ENCODE measurements at regions of chr22 and their contacts with region 1.

Region 1: GRCh38 chr22:19909350-19910179 is 32.0 kb upstream of the COMT start:
- DNase-seq: peak; percentile 58 to 92
- ATAC-seq: peak; percentile 94

Region 2: GRCh38 chr22:19705181-19705934 is 204.2 kb before region 1 on chr22:
- intact Hi-C with region 1: no loop called
- DNase-seq: no peak
- ATAC-seq: no peak

Region 3: GRCh38 chr22:19730655-19731360 is 178.8 kb before region 1 on chr22:
- intact Hi-C with region 1: loop called (anchors 5 kb)
- DNase-seq: peak; percentile 53 to 87
- ATAC-seq: peak; percentile 91

Measured in left colon (tissue), 2 donors.